ENCODE measurements at regions of chr11 and their contacts with region 1.

Region 1: GRCh38 chr11:106021967-106022794 is at the start of gene MSANTD4:
- DNase-seq: peak; percentile 99
- H3K4me3 Mint-ChIP-seq: peak within 1 kb of the TSS; percentile 85
- H3K27ac Mint-ChIP-seq: peak within 1 kb of the TSS; percentile 87
- H3K4me1 Mint-ChIP-seq: peaks cover 40% of the 10 kb centered on the region
- H3K27me3 Mint-ChIP-seq: peaks cover 3% of the 10 kb centered on the region
- total RNA-seq, gene MSANTD4: 11.4 to 13.1 TPM

Region 2: GRCh38 chr11:105705786-105706530 is 316.2 kb before region 1 on chr11:
- CTCF ChIA-PET with region 1: no interaction called
- POLR2A ChIA-PET with region 1: no interaction called
- intact Hi-C with region 1: no loop called
- DNase-seq: no peak
- H3K4me3 Mint-ChIP-seq: no peak overlapping the region
- H3K27ac Mint-ChIP-seq: no peak overlapping the region
- H3K4me1 Mint-ChIP-seq: no peaks in the 10 kb centered on the region
- H3K27me3 Mint-ChIP-seq: peaks cover 4% of the 10 kb centered on the region

Region 3: DNA sequence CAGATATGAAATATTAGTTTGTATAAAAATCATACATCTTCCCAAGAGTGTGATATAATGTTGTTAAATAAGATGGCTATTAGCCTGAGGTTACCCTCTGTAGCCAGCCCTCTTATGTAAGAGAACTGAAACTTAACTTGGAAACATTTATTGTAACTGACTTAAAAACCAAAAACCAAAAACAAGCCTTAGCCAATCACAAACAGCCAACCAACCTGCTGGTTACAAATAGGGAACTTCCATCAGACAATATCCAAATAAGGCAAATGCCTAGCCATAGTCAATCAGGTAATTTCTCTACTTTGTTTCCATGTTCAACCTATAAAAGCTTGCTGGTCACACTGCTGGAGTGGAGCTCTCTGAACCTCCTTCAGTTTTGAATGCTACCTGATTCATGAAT is 40.8 kb after region 1 on chr11:
- CTCF ChIA-PET with region 1: no interaction called
- POLR2A ChIA-PET with region 1: no interaction called
- intact Hi-C with region 1: loop called (anchors 1 kb)
- DNase-seq: no peak
- H3K4me3 Mint-ChIP-seq: no peak overlapping the region
- H3K27ac Mint-ChIP-seq: no peak overlapping the region
- H3K4me1 Mint-ChIP-seq: peaks cover 18% of the 10 kb centered on the region
- H3K27me3 Mint-ChIP-seq: no peaks in the 10 kb centered on the region

Region 4: GRCh38 chr11:106076919-106077608 is 54.9 kb after region 1 on chr11 and contains the start of gene KBTBD3:
- CTCF ChIA-PET with region 1: no interaction called
- POLR2A ChIA-PET with region 1: no interaction called
- intact Hi-C with region 1: loop called (anchors 1 kb)
- DNase-seq: peak; percentile 99
- H3K4me3 Mint-ChIP-seq: peak within 1 kb of the TSS; percentile 96
- H3K27ac Mint-ChIP-seq: peak within 1 kb of the TSS; percentile 96
- H3K4me1 Mint-ChIP-seq: peaks cover 52% of the 10 kb centered on the region
- H3K27me3 Mint-ChIP-seq: no peaks in the 10 kb centered on the region
- total RNA-seq, gene KBTBD3: 7.0 to 7.7 TPM

Region 5: GRCh38 chr11:106091480-106092123 is 69.4 kb after region 1 on chr11:
- CTCF ChIA-PET with region 1: no interaction called
- POLR2A ChIA-PET with region 1: no interaction called
- intact Hi-C with region 1: loop called (anchors 1 kb)
- DNase-seq: peak; percentile 48
- H3K4me3 Mint-ChIP-seq: no peak overlapping the region
- H3K27ac Mint-ChIP-seq: peak overlapping the region; percentile 44
- H3K4me1 Mint-ChIP-seq: peaks cover 44% of the 10 kb centered on the region
- H3K27me3 Mint-ChIP-seq: no peaks in the 10 kb centered on the region

Region 6: DNA sequence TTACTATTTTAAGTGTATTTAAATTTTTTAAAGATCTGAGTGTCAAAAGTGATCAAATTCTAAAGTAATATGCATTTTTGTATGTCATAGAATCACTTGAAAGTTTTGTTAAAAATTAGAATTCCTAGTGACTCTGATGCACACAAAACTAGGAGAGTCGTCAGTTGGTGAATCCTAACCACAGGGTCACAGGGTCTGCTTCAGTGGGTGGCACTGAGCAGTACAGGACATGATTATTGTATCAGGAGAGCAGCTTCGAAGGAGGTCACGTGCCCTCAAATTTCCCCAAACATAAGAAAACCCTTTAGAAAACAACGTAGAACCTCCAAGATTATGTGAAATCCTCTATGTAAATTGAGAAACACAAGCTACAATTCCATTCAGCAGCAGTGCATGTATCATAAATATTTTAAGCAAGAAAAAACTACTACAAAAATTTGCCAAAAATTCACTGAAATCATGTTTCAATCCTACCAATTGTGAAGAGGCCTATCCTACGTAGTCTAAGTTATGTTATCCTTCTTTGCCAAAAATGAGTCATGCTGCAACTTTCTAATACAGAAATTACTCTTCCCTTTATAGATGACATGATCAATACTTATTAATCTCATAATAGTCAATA is 378.9 kb after region 1 on chr11:
- CTCF ChIA-PET with region 1: no interaction called
- POLR2A ChIA-PET with region 1: no interaction called
- intact Hi-C with region 1: no loop called
- DNase-seq: no peak
- H3K4me3 Mint-ChIP-seq: no peak overlapping the region
- H3K27ac Mint-ChIP-seq: no peak overlapping the region
- H3K4me1 Mint-ChIP-seq: no peaks in the 10 kb centered on the region
- H3K27me3 Mint-ChIP-seq: no peaks in the 10 kb centered on the region

Region 7: DNA sequence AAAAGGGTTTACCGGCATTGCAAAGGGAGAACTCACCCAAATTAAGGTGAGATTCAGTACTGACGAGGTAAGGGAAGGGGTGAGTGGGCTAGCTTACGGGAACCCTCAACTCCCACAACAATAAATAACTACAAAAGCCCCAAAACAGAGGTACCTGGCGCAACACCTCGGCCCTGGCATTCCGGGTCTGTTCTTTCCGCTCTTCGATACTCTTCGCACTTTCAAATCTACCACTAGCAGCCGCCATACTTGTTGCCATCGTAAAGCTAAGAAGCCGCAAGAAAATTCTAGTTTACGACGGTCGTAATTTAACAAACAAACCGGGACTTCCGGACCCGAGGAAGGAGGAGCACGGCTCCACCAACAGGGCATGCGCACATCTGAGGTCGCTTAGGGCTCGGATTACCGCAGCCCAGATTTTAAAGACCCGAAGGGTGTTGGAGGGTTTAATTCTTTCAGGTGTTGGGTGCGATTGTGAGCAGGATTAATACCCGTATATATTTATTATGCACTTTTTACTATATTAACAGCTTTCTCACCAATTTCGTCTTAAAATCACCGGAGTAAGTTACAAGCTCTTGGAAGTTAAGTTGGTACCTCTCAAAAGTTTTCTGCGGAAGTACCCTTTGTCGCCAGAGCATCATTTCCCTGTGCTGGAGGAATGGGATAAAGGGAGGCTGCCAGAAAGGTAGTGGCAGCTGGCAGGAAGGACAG is 1435.5 kb after region 1 on chr11 and contains the start of gene CWF19L2:
- CTCF ChIA-PET with region 1: no interaction called
- POLR2A ChIA-PET with region 1: no interaction called
- intact Hi-C with region 1: loop called (anchors 5 kb)
- DNase-seq: peak; percentile 94
- H3K4me3 Mint-ChIP-seq: peak within 1 kb of the TSS; percentile 89
- H3K27ac Mint-ChIP-seq: peak within 1 kb of the TSS; percentile 77
- H3K4me1 Mint-ChIP-seq: peaks cover 23% of the 10 kb centered on the region
- H3K27me3 Mint-ChIP-seq: no peaks in the 10 kb centered on the region
- total RNA-seq, gene CWF19L2: 14.0 to 14.4 TPM

Region 8: DNA sequence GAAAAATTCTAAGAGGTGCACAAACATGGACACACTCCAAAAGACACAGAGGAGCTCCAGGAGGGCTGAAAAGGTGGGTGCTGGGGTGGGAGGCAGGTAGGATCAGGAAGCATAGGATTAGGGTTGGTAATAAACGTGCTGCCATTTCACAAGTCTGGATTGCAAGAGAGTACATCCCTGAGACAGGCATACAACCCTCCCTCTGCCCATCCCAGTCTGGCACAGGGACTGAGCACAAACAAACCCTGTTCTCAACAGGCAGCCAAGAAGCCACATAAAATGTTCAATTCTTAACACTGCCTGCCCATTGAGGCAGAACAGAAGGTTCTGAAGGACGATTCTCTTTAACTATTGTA is 1817.9 kb after region 1 on chr11:
- CTCF ChIA-PET with region 1: no interaction called
- POLR2A ChIA-PET with region 1: no interaction called
- intact Hi-C with region 1: loop called (anchors 5 kb)
- DNase-seq: no peak
- H3K4me3 Mint-ChIP-seq: peak overlapping the region; percentile 53
- H3K27ac Mint-ChIP-seq: peak overlapping the region; percentile 98
- H3K4me1 Mint-ChIP-seq: peaks cover 71% of the 10 kb centered on the region
- H3K27me3 Mint-ChIP-seq: no peaks in the 10 kb centered on the region

Measured in activated CD4-positive, alpha-beta memory T cell treated with anti-CD3 and anti-CD28 coated beads for 36 hours (primary cell).